Activated CD4-positive, alpha-beta T cell treated with anti-CD3 and anti-CD28 coated beads, Interleukin-2, amount 10 ng/mL, durations not matched to agents 7 days and 5 days (primary cell): ENCODE measurements at regions of chr5 and their contacts with region 1.

Region 1: GRCh38 chr5:111248571-111248970 is 24.4 kb downstream of the CAMK4 start:
- DNase-seq: no peak
- H3K4me3 Mint-ChIP-seq: no peak overlapping the region
- H3K27ac Mint-ChIP-seq: no peak overlapping the region
- H3K4me1 Mint-ChIP-seq: peaks cover 79% of the 10 kb centered on the region
- H3K27me3 Mint-ChIP-seq: no peaks in the 10 kb centered on the region

Region 2: DNA sequence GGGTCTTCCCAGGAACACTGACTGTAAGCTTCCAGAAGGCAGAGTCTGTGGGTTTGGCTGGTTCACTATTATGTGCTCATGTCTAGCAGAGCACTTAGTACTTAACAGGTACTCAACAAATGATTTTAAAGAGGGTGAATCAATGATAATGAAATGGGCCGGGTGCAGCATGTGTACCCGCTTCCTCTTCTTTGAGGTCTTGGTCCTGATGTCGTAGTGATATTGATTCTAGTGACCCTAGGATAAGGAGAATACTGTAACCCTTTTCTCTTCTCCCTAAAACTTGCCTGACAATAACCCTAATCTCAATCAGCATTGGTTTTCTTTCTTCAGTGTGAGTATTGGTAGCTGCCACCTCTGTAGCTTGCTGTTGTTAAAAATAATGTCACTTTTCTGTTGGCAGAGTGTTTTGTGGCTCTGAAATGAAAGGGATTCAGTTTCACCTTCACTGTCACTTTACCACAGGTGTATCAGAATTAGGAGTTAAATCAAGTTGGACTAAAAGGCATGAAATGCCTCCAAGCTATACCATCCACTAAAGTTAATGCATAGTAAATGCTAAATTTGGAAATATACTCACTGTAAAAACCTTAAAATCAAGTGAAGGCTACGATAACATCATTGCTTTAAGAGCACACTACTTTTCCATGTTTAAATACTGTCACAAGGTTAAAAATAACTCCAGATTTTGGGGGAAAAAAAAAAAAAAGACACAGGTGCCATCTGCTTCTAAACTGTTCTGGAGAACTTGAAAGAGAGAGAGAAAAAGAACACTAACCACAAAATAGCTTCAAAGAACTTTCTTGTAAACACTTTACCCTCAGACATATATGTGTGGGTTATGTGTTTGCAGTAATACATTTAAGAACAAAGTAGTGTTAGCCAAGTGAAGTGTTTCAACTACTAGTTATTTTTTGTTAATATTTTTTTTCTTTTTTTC is 18.4 kb before region 1 on chr5:
- CTCF ChIA-PET with region 1: interaction called, 25 read pairs
- POLR2A ChIA-PET with region 1: no interaction called
- DNase-seq: peak; percentile 40
- H3K4me3 Mint-ChIP-seq: peak overlapping the region; percentile 77
- H3K27ac Mint-ChIP-seq: peak overlapping the region; percentile 98
- H3K4me1 Mint-ChIP-seq: peaks cover 71% of the 10 kb centered on the region
- H3K27me3 Mint-ChIP-seq: no peaks in the 10 kb centered on the region

Region 3: DNA sequence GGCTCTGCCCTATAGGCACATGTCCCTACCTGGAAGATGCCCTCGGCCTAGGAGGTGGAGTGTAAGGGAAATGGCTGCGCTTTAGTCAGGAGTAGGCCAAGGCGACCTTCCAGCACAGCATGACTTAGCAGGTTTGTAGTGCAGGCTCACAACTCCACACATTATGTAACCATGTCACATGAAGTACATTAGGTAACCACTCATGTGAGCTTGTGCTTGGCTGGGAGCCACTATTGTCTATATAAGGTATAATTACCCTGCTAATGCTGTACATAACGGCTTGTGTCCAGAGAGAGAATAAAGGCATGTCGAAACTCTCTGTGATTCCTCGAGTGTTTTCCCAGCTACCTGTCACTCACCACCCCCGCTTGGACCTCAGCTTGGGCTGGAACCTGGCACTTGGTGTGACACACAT is 50.5 kb after region 1 on chr5:
- CTCF ChIA-PET with region 1: no interaction called
- POLR2A ChIA-PET with region 1: no interaction called
- DNase-seq: no peak
- H3K4me3 Mint-ChIP-seq: no peak overlapping the region
- H3K27ac Mint-ChIP-seq: no peak overlapping the region
- H3K4me1 Mint-ChIP-seq: peaks cover 6% of the 10 kb centered on the region
- H3K27me3 Mint-ChIP-seq: no peaks in the 10 kb centered on the region